ENCODE measurements at regions of chr15 and their contacts with region 1.

Region 1: GRCh38 chr15:43277231-43277823 is 10.6 kb upstream of the TGM5 start:
- ATAC-seq: no peak
- H3K4me3 ChIP-seq: no peak overlapping the region
- H3K27ac ChIP-seq: no peak overlapping the region
- H3K4me1 ChIP-seq: no peaks in the 10 kb centered on the region

Region 2: DNA sequence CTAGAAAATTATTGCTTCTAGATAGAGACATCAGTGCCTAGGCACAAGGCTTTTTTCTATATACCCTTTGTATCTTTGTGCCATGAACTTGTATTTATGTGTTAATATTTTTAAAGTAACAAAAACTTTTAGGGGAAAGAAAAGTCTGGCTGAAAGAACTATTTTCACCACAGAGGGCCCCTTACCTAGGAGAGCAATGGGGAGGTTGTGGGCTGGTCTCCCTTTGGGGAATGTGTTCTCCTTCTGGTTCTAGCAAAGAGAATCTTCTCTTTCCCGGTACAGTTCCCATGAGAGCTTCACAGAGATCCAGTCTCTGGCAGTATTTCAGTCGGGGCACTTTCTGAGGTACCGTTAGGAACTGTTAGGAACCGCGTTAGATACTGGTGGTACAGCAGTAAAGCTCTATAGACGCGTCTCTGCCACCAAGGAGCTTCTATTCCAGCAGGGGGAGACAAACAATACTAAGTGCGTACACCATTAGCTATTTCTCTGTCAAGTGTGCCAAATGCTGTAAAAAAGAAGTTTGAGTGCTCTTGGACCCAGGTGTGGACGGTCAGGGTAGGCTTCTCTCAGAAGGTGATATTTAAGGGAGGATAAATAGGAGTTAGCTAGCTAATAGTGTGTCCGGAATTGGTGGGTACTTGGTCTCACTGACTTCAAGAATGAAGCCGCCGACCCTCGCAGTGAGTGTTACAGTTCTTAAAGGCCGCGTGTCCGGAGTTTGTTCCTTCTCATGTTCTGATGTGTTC is 52.0 kb before region 1 on chr15:
- in situ Hi-C with region 1: loop called in 1 of 9 experiments (anchors 5 kb)
- ATAC-seq: peak in 5 of 8 experiments; percentile 49 to 98 (median 95)
- H3K4me3 ChIP-seq: no peak overlapping the region
- H3K27ac ChIP-seq: no peak overlapping the region
- H3K4me1 ChIP-seq: no peaks in the 10 kb centered on the region